Tibial artery (tissue), 4 donors: ENCODE measurements at regions of chr5 and their contacts with region 1.

Region 1: DNA sequence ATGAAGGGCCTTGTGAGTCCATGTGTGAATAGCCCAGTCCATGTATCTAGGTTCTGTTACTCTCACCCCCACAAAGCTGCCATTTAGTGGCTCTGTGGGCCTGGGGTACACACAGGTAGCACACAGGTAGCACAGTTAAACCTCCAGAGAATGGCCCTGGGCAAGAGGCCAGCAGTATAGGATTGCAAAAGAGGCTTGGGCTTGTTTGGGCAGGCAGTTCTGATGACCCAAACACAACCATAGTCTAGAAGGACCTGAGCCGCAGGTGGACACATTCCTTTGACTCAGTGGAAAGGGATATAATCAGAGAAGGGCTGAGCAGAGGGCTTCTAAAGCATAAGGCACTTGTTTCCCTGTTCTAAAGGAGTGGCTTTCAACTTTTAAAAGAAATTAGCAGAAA is 326.8 kb upstream of the SGCD start:
- DNase-seq: no peak
- H3K4me3 ChIP-seq: no peak overlapping the region
- H3K27ac ChIP-seq: no peak overlapping the region
- H3K4me1 ChIP-seq: no peaks in the 10 kb centered on the region
- H3K27me3 ChIP-seq: no peaks in the 10 kb centered on the region
- CTCF ChIP-seq: no peak

Region 2: GRCh38 chr5:154783774-154784460 is 1216.2 kb before region 1 on chr5:
- intact Hi-C with region 1: no loop called
- DNase-seq: peak in 1 of 2 donors; percentile 36
- H3K4me3 ChIP-seq: no peak overlapping the region
- H3K27ac ChIP-seq: no peak overlapping the region
- H3K4me1 ChIP-seq: peaks cover 0 to 97% (median 64%) of the 10 kb centered on the region in 4 donors
- H3K27me3 ChIP-seq: no peaks in the 10 kb centered on the region
- CTCF ChIP-seq: no peak

Region 3: GRCh38 chr5:155953335-155953734 is 46.8 kb before region 1 on chr5:
- intact Hi-C with region 1: loop called (anchors 2 kb)
- DNase-seq: no peak
- H3K4me3 ChIP-seq: no peak overlapping the region
- H3K27ac ChIP-seq: no peak overlapping the region
- H3K4me1 ChIP-seq: peaks cover 0 to 13% (median 0%) of the 10 kb centered on the region in 4 donors
- H3K27me3 ChIP-seq: no peaks in the 10 kb centered on the region
- CTCF ChIP-seq: no peak

Region 4: GRCh38 chr5:156201788-156202403 is 201.8 kb after region 1 on chr5:
- intact Hi-C with region 1: no loop called
- DNase-seq: peak in 1 of 2 donors; percentile 23
- H3K4me3 ChIP-seq: no peak overlapping the region
- H3K27ac ChIP-seq: peak overlapping the region; percentile 34 to 55
- H3K4me1 ChIP-seq: peaks cover 0 to 16% (median 5%) of the 10 kb centered on the region in 4 donors
- H3K27me3 ChIP-seq: no peaks in the 10 kb centered on the region
- CTCF ChIP-seq: no peak